Mammary epithelial cell (primary cell): ENCODE measurements at regions of chr5 and their contacts with region 1.

Region 1: DNA sequence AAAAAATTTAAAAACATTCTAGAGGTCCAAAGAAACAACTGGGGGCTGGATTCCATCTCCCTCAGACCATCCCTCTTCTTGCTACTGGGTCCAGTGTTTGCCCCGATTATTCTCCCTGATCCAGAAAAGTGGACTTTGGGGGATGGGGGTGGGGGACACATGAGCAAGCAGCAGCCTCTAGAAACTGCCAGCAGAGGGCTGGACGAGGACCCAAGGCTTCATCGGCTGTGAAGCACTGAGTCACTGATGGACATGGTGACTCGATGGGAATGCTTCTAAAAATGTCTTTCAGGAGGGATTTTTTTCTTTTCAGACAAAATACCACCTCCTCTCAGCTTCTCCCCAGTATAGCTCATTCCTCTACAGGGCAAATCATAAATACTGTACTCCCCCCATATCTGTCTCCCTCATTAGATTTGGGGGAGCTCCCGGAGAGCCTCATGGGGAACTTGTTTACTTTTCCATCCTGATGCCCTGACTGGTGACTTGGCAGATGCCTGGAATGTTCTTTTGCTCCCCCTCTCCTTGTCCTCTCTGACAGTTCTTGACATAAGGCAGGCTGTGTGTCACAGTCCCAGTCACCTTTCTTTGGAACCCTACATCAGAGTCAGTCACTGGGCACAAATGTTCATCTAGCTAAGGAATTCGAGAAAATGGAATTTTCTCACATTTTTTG is 67.2 kb upstream of the STC2 start:
- DNase-seq: peak; percentile 17
- H3K4me3 ChIP-seq: no peak overlapping the region
- H3K27ac ChIP-seq: no peak overlapping the region
- H3K4me1 ChIP-seq: no peaks in the 10 kb centered on the region
- H3K27me3 ChIP-seq: peaks cover 2% of the 10 kb centered on the region
- CTCF ChIP-seq: peak; percentile 10 to 32

Region 2: DNA sequence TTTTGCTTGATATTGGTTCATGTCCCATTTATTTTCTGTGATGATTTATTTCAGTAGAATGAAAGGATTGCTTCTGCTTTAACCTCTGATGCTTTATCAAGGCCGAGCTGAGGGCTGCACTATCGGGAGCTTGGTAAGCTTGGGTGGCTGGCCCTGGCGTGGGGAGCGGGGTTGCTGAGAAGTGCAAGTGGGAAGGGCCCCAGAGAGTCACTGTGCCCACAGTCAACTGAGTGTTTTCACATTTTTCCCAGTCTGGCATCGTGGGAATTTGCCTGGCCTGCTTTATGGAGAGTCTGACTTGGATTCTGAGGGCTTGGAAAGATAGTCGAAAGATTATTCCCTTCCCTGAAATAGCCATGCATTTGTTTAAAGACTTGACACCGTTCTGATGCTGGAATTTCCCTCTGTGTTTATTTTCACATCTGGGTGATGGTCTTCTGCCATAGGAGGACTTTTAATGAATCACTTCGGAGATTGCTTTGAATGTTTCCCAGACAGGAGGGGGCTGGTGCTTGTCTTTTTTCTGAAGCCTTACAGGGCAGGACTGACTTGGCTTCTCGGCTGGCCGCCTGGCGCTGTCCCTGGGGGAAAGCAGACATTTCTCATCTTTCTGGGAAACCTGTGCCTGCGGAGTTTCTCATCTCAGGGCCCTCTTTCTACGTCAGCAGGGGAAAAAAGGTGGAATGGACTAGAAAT is 82.1 kb after region 1 on chr5:
- CTCF ChIA-PET with region 1: no interaction called
- dilution Hi-C with region 1: loop called (anchors 5 kb)
- in situ Hi-C with region 1: no loop called
- intact Hi-C with region 1: no loop called
- DNase-seq: no peak
- H3K4me3 ChIP-seq: no peak overlapping the region
- H3K27ac ChIP-seq: no peak overlapping the region
- H3K4me1 ChIP-seq: peaks cover 18% of the 10 kb centered on the region
- H3K27me3 ChIP-seq: no peaks in the 10 kb centered on the region
- CTCF ChIP-seq: no peak

Region 3: DNA sequence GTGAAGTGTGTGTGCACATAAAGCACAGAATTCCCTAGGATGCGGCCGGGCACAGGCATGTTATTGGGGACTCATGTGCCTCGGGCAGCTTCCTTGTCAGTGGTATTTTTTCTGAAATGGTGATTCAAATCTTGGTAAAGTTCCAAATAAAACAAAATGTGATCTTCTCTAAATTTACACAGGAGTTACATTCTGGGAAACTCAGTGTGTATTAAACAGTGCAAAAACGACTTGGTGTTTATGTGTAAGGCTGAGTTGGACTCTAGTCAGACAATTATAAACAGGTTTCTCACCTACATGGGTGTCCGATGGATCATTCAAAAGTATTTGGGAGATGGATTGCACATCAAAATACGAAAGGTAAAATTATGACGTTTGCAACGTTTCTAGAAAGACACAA is 172.2 kb after region 1 on chr5:
- CTCF ChIA-PET with region 1: interaction called, 10 read pairs
- dilution Hi-C with region 1: no loop called
- in situ Hi-C with region 1: no loop called
- intact Hi-C with region 1: no loop called
- DNase-seq: peak; percentile 70
- H3K4me3 ChIP-seq: no peak overlapping the region
- H3K27ac ChIP-seq: peak overlapping the region; percentile 36
- H3K4me1 ChIP-seq: peaks cover 23% of the 10 kb centered on the region
- H3K27me3 ChIP-seq: no peaks in the 10 kb centered on the region
- CTCF ChIP-seq: no peak